ENCODE measurements at regions of chr16 and their contacts with region 1.

Region 1: GRCh38 chr16:31073968-31074813 is at the starts of genes ZNF646 and ZNF668:
- H3K4me3 Mint-ChIP-seq: peak within 1 kb of the TSS; percentile 94
- H3K27ac Mint-ChIP-seq: peak within 1 kb of the TSS; percentile 91
- H3K4me1 Mint-ChIP-seq: peaks cover 67% of the 10 kb centered on the region
- H3K27me3 Mint-ChIP-seq: no peaks in the 10 kb centered on the region

Region 2: DNA sequence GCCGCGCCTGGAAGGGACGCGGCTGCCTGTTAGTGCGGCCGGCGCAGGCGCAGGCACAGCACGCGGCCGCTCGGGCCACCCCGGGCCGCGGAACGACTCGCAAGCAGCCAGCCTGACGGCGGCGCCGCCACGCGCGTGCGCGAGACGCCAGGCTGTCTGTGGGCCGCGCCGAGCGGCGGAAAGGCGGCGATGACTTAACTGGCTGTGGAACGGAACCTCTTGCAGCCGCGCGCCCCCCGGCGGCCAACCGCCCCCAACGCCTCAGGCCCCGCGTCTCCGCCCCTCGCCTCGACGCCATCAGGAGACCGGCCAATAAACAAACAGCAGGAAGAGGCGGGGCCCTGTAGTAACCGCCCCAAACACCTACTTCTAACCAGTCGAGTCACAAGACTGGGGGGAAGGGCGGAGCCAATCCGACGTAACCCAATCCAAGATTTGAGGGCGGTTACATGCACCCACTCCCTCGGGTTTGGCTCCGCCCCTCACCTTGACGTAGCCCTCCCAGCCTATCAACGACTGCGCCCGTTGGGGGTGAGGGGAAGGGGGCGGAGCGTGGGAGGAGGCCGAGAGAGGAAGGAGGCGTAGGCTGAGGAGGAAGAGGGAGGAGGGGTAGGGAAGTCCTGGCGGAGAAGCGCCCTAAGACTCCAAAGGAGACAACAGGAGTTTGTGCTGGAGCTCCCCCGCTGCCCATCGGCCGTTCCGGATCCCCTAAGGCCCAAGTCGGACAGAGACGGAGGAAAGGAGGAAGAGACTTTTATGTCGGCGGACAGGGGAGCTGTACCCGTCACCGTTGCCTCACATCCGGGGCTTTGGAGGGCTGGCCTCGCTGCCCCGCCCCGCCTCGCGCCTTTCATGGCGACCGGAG is 416.1 kb before region 1 on chr16 and contains the start of gene FBRS:
- intact Hi-C with region 1: loop called (anchors 5 kb)
- H3K4me3 Mint-ChIP-seq: peak within 1 kb of the TSS; percentile 98
- H3K27ac Mint-ChIP-seq: peak within 1 kb of the TSS; percentile 100
- H3K4me1 Mint-ChIP-seq: peaks cover 66% of the 10 kb centered on the region
- H3K27me3 Mint-ChIP-seq: no peaks in the 10 kb centered on the region

Region 3: DNA sequence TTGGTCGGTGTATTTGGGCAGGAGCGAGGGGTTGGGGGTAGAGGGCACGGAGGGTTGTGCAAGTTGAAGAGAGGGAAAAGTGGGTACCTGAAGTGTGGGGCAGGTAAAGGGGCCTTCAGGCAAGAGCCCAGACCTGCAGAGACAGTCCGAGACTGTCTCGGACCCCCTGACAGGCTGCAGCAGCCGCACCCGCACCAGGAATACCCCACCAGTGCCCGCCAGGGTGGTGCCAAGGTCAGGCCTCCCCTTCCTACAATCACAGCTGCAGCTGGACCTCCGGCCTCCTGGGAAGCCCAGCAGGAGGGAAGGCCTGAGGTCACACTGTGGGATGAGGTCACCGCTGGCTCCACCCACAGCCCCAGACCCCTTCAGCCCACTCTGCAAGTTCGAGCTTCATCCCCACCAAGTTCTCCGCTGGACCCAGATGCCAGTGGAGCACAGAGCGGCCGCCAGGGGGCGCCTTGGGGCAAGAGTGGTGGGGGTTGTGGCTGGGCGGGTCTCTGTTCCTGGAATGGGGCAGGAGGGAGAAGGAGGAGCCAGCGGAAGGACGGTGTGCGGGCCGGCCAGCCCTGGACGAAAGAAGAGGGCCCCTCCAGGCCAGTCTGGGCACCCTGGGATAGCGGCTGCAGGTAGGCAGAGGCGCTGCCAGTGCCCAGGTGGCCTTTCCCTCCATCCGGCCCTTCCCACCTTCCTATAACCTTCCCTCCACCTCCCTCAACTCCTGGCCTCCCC is 89.4 kb before region 1 on chr16 and contains the start of gene HSD3B7:
- intact Hi-C with region 1: loop called (anchors 5 kb)
- H3K4me3 Mint-ChIP-seq: peak within 1 kb of the TSS; percentile 86
- H3K27ac Mint-ChIP-seq: peak within 1 kb of the TSS; percentile 88
- H3K4me1 Mint-ChIP-seq: peaks cover 41% of the 10 kb centered on the region
- H3K27me3 Mint-ChIP-seq: no peaks in the 10 kb centered on the region

Region 4: DNA sequence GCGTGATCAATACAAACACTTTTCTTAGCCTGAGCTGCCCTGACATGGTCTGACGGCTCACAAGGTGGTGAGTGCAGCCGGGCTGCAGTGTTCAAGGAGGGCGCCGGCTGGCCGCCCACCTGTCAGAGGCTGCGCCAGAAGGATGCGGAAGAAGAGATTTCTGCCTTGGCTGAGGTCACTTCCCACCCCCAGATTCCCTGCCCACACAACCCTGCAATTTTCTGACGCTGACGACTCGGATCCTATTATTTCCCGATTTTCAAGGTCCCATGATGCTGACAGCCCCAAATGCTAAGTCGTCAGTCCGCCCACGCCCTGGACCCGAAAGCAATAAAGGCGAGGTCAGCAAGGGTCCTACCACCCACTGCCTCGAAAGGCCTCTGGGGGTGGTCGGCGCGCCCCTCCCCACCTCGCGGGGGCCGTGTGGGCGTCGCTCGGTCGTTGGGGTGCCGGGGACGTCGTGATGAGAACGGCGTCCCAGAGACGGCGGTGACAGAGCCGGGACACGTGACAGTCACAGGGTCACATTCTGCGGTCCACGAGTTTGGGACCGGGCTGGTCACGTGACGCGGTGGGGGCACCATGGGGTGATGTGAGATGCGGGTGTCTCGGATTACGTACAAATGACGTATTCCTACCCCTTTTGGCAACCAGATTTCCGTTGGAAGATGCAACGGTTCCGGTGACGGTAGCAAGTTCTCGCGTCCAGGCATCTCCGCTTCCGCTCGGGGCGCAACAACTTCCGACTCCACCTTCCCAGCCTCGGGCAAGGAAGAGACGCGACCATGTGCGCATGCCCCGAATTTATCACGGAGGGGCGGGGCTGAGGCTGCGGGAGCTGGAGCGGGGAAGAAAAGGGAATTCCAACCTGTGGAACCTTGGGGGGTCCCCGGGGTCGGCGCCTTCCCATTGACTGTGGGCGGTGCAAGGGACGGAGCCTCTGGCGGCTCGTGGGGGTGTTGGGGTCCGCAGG is 41.2 kb before region 1 on chr16 and contains the start of gene STX4:
- intact Hi-C with region 1: loop called (anchors 1 kb)
- H3K4me3 Mint-ChIP-seq: peak within 1 kb of the TSS; percentile 98
- H3K27ac Mint-ChIP-seq: peak within 1 kb of the TSS; percentile 99
- H3K4me1 Mint-ChIP-seq: peaks cover 62% of the 10 kb centered on the region
- H3K27me3 Mint-ChIP-seq: no peaks in the 10 kb centered on the region

Region 5: DNA sequence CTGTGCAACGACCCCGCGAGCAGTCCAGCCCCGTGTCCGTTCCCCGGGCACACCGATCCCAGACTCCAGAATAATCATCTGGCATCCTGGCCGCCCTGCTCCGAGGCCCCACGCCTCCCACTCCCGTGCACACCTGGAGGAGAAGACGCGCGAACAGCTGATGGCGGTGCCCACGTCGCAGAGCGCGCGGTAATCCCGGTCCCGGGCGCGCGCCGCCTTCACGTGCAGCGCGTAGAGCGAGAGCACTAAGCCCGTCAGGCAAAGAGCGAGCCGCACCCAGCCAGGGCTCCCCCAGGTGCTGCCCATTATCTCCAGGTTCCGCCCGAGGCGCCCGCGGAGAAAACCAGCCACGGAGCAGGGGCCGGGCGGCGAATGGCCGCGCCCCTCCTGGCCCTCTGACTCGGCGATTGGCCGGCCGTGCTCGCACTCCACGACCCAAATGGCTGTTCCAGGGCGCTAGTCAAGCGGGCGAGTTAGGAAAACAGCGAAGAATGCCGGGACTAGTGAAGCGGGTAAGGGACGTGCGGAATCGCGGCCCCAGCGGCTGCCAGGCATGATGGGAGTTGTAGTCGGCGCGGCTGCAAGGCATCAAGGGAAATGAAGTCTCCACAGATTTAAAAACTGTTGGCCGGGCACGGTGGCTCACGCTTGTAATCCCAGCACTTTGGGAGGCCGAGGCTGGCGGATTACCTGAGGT is 20.4 kb after region 1 on chr16 and contains the start of gene VKORC1:
- intact Hi-C with region 1: loop called (anchors 2 kb)
- H3K4me3 Mint-ChIP-seq: peak within 1 kb of the TSS; percentile 88
- H3K27ac Mint-ChIP-seq: peak within 1 kb of the TSS; percentile 83
- H3K4me1 Mint-ChIP-seq: peaks cover 37% of the 10 kb centered on the region
- H3K27me3 Mint-ChIP-seq: no peaks in the 10 kb centered on the region

Region 6: DNA sequence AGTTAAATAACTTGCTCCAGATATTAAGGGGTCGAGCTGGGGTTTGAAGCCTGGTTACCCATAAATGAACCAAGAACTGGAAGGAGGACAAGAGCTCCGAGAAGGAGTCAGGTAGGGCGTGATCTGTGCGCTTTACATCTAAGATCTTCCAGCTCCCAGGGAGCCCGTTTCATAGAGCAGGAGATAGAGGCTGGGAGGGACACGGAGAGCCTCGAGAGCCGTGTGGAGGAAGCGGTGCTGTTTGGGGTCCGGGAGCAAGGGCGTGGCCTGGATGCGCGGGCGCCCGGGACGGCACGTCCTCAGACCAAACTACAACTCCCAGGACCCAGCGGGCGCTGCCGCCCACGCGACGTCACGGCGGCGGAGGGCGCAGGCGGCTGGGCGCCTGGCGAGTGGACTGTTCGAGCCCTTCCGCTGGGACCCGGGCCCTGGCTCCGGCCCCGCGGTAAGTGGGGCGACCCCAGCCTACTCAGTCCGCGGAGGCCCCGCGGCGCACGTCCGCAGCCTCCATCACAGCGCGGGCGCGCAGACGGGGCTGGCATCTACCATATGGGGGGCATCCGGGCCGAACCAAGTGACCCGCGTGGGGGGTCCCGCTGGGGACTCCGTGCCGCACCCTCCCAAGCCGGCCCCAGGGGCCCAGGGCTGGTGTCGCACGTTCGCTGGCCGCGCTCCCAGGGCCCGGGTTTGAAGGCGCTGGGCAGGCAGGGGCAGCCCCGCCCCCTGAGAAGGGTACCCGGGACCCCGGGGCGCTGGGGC is 34.0 kb after region 1 on chr16 and contains the start of gene BCKDK:
- intact Hi-C with region 1: loop called (anchors 5 kb)
- H3K4me3 Mint-ChIP-seq: peak within 1 kb of the TSS; percentile 88
- H3K27ac Mint-ChIP-seq: peak within 1 kb of the TSS; percentile 75
- H3K4me1 Mint-ChIP-seq: peaks cover 58% of the 10 kb centered on the region
- H3K27me3 Mint-ChIP-seq: no peaks in the 10 kb centered on the region

Region 7: GRCh38 chr16:31142109-31143010 is 68.2 kb after region 1 on chr16:
- intact Hi-C with region 1: loop called (anchors 1 kb)
- H3K4me3 Mint-ChIP-seq: peak overlapping the region; percentile 65
- H3K27ac Mint-ChIP-seq: peak overlapping the region; percentile 89
- H3K4me1 Mint-ChIP-seq: peaks cover 66% of the 10 kb centered on the region
- H3K27me3 Mint-ChIP-seq: no peaks in the 10 kb centered on the region